Aorta (tissue), 5 donors: ENCODE measurements at regions of chr1 and their contacts with region 1.

Region 1: DNA sequence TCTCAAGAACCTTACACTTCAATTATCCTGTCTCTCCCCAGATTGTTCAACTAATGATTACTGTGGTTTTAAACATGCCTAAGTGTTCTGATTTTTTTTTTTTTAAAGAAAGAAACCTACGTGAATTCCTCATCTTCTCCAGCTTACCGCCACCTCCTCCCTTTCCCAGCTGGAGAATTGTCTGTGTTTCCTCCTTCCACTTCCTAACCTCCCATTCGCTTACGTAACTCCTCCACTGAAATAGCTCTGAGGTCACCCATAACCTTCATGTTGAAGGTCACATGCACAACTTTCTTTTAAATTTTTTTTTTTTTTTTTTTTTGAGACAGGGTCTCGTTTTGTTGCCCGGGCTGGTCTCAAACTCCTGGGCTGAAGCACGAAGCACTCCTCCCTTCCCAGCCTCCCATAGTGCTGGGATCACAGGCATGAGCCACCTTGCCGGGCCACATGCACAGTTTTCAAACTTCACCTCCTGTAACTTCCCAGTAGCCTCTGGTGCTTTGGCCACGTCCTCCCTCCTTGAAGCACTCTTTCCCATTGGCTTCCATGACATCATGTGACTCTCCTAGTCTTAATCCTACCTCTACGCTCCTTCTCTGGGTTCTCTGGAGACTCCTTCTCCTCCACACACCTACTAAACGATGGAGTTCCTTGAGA is 9.8 kb upstream of the CAPZB start:
- DNase-seq: no peak
- ATAC-seq: peak; percentile 38
- H3K4me3 ChIP-seq: no peak overlapping the region
- H3K27ac ChIP-seq: no peak overlapping the region
- H3K4me1 ChIP-seq: peaks cover 0 to 3% of the 10 kb centered on the region in 2 donors
- H3K27me3 ChIP-seq: no peaks in the 10 kb centered on the region

Region 2: GRCh38 chr1:19390901-19391595 is 104.1 kb before region 1 on chr1:
- intact Hi-C with region 1: loop called in 1 of 2 experiments (anchors 5 kb)
- DNase-seq: peak in 1 of 2 donors; percentile 80
- ATAC-seq: peak; percentile 70
- H3K4me3 ChIP-seq: no peak overlapping the region
- H3K27ac ChIP-seq: peak overlapping the region; percentile 58 to 92
- H3K4me1 ChIP-seq: peaks cover under 1 to 2% of the 10 kb centered on the region in 2 donors
- H3K27me3 ChIP-seq: no peaks in the 10 kb centered on the region

Region 3: DNA sequence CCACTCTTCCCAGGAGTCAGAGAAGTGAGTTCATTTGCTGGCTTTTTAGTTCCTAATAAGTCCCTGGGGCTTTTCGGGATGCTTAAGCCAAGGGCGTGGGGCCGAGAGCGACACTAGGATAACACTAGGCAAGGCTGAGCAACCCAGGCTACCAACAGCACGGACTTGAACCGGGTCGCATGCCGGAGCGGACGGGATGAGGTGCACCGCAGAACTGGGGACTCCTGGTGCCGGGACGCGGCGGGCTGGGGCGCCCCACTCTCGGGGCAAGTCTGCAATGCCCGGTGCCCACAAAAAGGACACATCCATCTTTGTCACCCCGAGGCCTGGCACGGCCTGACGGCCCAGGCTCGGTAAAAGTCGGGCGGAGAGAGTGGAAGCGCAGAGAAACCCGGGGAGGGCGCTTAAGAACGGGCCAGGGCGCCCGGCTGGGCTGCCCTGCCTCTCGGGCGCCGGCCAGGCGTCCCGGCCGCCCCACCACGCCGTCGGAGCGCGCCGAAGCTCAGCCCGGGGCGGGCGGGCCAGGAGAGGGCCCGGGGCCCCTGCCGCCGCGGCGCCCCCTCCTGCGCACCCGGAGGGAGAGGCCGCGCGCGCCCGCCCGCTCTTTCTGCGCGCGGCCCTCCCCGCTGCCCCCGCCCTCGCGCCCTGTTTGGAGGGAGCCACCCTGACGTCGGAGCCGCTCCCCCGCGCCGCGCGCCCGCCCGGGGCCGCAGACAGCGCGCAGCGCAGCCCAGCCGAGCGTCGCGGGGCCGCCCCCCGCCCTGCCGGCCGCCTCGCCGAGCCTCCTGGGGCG is 148.7 kb after region 1 on chr1 and contains the start of gene NBL1:
- intact Hi-C with region 1: loop called in 1 of 2 experiments (anchors 5 kb)
- DNase-seq: peak; percentile 86 to 92
- ATAC-seq: peak; percentile 81
- H3K4me3 ChIP-seq: peak within 1 kb of the TSS; percentile 38 to 89
- H3K27ac ChIP-seq: peak within 1 kb of the TSS; percentile 73 to 78
- H3K4me1 ChIP-seq: no peaks in the 10 kb centered on the region
- H3K27me3 ChIP-seq: no peaks in the 10 kb centered on the region
- total RNA-seq, gene NBL1: 134 to 188 TPM